ENCODE measurements at regions of chr6 and their contacts with region 1.

Region 1: GRCh38 chr6:56593801-56594318 is 48.8 kb downstream of the DST start:
- DNase-seq: no peak

Region 2: GRCh38 chr6:56359201-56359899 is 234.5 kb before region 1 on chr6:
- intact Hi-C with region 1: loop called (anchors 5 kb)
- DNase-seq: no peak

Region 3: DNA sequence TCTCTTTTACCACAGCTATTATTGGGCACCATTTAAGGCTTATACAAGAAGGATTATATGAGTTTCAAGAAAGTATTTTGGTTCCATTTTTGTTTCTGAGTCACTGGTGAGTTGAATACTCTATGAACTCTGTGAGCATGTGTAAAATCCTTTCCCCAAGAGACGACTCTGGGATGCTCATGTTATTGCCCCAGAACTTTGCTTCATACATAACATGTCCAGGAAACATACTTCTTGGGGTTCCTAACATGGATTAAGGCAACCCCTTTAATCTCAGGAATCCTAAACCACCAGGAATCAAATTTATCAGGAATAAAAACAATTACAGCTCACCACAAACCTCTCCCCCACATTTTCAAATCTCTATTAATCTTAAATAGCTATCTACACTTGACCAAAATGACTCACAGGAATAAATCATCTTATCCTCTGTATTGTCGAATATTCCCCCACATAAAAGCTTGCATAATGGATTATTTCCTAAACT is 229.0 kb before region 1 on chr6:
- intact Hi-C with region 1: loop called in 1 of 2 experiments (anchors 5 kb)
- DNase-seq: no peak

Measured in posterior vena cava (tissue), 2 donors.